Activated CD4-positive, alpha-beta memory T cell treated with anti-CD3 and anti-CD28 coated beads for 36 hours (primary cell): ENCODE measurements at regions of chr18 and their contacts with region 1.

Region 1: DNA sequence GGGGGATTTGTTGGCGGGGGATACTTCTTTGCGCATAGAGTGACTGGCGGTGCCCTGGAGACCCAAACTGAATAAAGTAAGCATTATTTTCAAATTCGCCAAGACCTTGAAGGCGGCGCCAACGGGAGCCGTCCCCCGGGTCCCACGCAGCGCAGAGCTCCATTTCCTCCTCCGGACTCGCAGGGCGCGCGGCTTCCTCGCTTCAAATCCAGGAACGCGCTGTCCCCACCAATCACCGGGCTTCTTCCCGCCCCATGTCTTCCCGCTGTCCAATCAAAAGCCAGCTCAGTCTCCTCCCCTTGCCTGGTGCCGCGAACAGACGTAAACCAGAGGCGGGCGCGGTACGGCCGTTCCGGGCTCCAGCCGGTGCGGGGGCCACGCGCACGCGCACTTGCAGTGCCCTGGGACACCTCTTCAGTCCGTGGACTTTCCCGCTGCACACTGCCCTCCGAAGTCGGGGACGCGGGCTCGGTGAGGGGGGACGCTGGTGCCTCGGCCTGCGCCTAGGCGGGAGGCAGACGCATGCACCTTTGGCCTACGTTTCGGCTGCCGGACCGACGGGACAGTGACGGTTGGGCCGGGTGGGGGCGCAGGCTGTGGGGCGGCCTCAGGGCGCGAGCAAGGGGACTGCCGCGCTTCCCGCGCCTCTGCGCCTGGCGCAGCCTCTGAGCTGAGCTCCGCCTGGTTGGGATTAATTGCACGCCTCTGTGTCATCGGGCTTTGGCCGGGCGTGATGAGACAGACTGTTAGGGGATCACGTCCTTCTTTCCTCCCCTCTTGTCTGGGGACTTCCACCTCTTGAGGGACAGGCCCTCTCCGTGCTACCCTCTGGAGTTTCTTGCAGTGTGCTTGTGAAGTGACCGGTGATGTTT is at the start of gene CEP192:
- DNase-seq: peak; percentile 99
- H3K4me3 Mint-ChIP-seq: peak within 1 kb of the TSS; percentile 96
- H3K27ac Mint-ChIP-seq: peak within 1 kb of the TSS; percentile 92
- H3K4me1 Mint-ChIP-seq: peaks cover 15% of the 10 kb centered on the region
- H3K27me3 Mint-ChIP-seq: peaks cover 3% of the 10 kb centered on the region
- total RNA-seq, gene CEP192: 31.0 to 34.0 TPM

Region 2: GRCh38 chr18:12702221-12703095 is 288.7 kb before region 1 on chr18 and contains the starts of genes CEP76 and PSMG2:
- CTCF ChIA-PET with region 1: no interaction called
- POLR2A ChIA-PET with region 1: interaction called, 7 read pairs
- intact Hi-C with region 1: loop called (anchors 2 kb)
- DNase-seq: peak; percentile 88
- H3K4me3 Mint-ChIP-seq: peak within 1 kb of the TSS; percentile 96
- H3K27ac Mint-ChIP-seq: peak within 1 kb of the TSS; percentile 98
- H3K4me1 Mint-ChIP-seq: peaks cover 35% of the 10 kb centered on the region
- H3K27me3 Mint-ChIP-seq: no peaks in the 10 kb centered on the region
- total RNA-seq, gene CEP76: 14.4 to 15.0 TPM
- total RNA-seq, gene PSMG2: 112 to 119 TPM

Region 3: GRCh38 chr18:12857215-12857905 is 133.8 kb before region 1 on chr18:
- CTCF ChIA-PET with region 1: no interaction called
- POLR2A ChIA-PET with region 1: no interaction called
- intact Hi-C with region 1: no loop called
- DNase-seq: peak; percentile 76
- H3K4me3 Mint-ChIP-seq: peak overlapping the region; percentile 18
- H3K27ac Mint-ChIP-seq: peak overlapping the region; percentile 84
- H3K4me1 Mint-ChIP-seq: peaks cover 64% of the 10 kb centered on the region
- H3K27me3 Mint-ChIP-seq: no peaks in the 10 kb centered on the region

Region 4: DNA sequence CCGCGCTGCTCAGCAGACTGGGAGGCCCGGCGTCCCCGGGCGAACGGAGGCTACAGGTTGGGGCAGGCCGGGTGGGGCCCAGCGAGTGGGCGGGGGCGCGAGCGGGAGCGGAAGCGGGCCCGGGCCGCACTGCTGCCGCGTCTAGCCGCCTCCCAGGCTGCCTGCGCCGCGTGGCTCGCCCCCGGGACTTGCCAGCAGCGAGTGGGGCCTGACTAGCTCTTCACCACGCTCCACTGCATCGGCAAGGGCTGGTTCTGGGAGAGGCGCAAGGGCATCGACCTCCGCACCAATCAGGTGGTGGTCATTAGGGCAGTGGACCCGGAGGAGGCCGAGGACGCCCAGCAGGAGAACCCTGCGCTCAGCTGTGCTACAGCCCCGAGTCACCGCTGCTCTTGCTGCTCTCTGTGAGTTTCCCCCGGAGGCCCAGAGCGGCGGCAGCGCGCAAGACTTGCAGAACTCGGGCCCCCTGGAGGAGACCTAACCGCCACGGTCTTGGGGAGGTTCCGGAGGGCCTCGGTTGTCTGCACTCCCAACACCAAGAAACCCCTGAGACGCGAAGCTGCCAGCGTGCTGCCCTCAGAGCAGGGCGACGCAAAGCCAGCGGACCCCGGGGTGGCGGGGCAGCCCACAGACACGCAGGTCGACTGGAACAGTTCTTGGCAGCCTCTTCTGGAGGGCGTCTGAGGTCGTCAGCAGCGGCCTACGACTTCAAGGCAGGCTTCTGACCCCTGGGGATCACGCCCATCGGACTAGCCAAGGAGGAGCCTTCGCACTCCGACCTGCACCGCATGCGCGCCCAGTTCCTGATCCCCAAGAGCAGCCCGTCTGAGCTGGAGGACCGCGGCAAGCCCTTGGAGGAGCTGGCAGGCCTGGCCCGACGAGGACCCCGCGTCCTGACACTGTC is 79.9 kb before region 1 on chr18:
- CTCF ChIA-PET with region 1: no interaction called
- POLR2A ChIA-PET with region 1: no interaction called
- intact Hi-C with region 1: no loop called
- DNase-seq: peak; percentile 65
- H3K4me3 Mint-ChIP-seq: peak overlapping the region; percentile 48
- H3K27ac Mint-ChIP-seq: no peak overlapping the region
- H3K4me1 Mint-ChIP-seq: peaks cover 7% of the 10 kb centered on the region
- H3K27me3 Mint-ChIP-seq: peaks cover 2% of the 10 kb centered on the region

Region 5: GRCh38 chr18:12947355-12948041 is 43.7 kb before region 1 on chr18 and contains the start of gene SEH1L:
- CTCF ChIA-PET with region 1: no interaction called
- POLR2A ChIA-PET with region 1: interaction called, 17 read pairs
- intact Hi-C with region 1: loop called (anchors 1 kb)
- DNase-seq: peak; percentile 100
- H3K4me3 Mint-ChIP-seq: peak within 1 kb of the TSS; percentile 95
- H3K27ac Mint-ChIP-seq: peak within 1 kb of the TSS; percentile 97
- H3K4me1 Mint-ChIP-seq: peaks cover 45% of the 10 kb centered on the region
- H3K27me3 Mint-ChIP-seq: no peaks in the 10 kb centered on the region
- total RNA-seq, gene SEH1L: 90.3 to 92.5 TPM

Region 6: GRCh38 chr18:13003466-13003896 is 12.3 kb after region 1 on chr18:
- CTCF ChIA-PET with region 1: interaction called, 4 read pairs
- POLR2A ChIA-PET with region 1: interaction called, 14 read pairs
- intact Hi-C with region 1: no loop called
- DNase-seq: peak; percentile 23
- H3K4me3 Mint-ChIP-seq: no peak overlapping the region
- H3K27ac Mint-ChIP-seq: no peak overlapping the region
- H3K4me1 Mint-ChIP-seq: peaks cover 16% of the 10 kb centered on the region
- H3K27me3 Mint-ChIP-seq: no peaks in the 10 kb centered on the region

Region 7: DNA sequence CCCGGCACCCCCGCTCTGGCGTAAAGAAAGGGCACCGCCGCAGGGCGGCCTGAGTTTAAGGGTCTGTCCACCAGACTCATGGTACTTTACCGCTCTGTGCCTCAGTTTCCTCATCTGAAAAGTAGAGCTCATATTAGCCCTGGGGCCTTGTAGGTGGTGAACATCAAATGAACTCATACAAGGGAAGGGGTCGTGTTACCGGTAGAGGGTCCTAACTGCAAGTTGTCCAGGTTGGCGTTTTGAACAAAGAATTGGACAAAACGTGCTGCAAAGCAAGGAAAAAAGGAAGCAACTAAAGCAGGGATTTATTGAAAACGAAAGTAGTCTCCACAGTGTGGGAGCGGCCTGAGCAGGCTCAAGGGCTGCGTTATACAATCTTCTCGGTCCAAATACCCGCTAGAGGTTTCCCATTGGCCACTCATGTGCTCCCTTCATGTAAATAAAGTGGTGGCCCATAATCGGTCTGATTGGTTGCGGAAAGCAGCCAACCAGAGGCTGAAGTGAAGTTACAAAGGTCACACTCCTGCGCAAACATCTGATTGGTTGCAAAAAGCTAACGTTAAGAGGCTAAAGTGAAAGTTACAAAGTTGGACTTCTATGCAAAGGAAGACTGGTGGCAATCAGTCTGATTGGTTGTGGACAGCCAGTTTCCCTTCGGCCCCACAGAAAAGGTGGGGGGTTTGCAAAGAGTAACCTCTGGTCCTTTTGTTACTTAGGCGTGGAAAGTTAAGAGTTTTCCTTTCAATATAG is 146.6 kb after region 1 on chr18:
- CTCF ChIA-PET with region 1: no interaction called
- POLR2A ChIA-PET with region 1: interaction called, 3 read pairs
- intact Hi-C with region 1: loop called (anchors 2 kb)
- DNase-seq: peak; percentile 81
- H3K4me3 Mint-ChIP-seq: peak overlapping the region; percentile 88
- H3K27ac Mint-ChIP-seq: peak overlapping the region; percentile 69
- H3K4me1 Mint-ChIP-seq: peaks cover 26% of the 10 kb centered on the region
- H3K27me3 Mint-ChIP-seq: no peaks in the 10 kb centered on the region

Region 8: DNA sequence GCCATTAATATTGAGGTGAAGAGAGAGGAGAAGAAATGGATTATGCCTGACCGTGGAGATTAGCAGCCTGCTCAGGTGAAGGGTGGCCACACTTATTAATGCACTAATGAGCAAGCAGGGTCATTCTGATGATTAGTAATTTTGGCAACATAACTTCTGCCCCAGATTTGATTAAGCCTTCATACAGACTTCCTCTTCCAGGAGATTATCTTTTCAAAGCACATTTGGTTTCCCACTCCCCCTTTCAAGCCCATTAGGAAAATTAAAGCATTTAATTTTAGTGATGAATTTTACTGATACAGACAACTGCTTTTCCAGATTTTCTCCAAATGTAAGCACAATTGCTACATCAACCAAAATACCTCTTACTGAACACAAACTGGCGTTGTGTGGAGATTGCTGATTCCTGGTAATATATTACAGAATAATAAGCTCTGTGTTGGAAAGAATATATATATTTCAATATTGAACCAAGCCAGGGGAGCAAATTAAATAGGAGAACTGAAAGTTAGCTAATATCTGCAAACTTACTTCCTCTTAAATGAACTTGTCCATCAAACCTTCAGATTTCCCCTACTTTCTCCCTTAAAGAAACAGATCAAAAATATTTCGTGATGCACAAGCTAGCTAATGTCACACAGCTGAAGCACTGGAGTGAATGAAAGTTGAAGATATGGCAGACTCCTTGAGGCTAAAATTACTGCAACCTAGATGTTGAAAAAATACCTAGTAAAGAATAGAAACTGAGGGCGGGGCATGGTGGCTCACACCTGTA is 594.4 kb after region 1 on chr18:
- CTCF ChIA-PET with region 1: no interaction called
- POLR2A ChIA-PET with region 1: no interaction called
- intact Hi-C with region 1: loop called (anchors 10 kb)
- DNase-seq: no peak
- H3K4me3 Mint-ChIP-seq: no peak overlapping the region
- H3K27ac Mint-ChIP-seq: no peak overlapping the region
- H3K4me1 Mint-ChIP-seq: peaks cover 55% of the 10 kb centered on the region
- H3K27me3 Mint-ChIP-seq: peaks cover 1% of the 10 kb centered on the region